ENCODE measurements at regions of chr17 and their contacts with region 1.

Region 1: GRCh38 chr17:80594431-80595269 is 50.0 kb downstream of the RPTOR start:
- DNase-seq: no peak
- H3K4me3 Mint-ChIP-seq: no peak overlapping the region
- H3K27ac Mint-ChIP-seq: no peak overlapping the region
- H3K4me1 Mint-ChIP-seq: peaks cover 73% of the 10 kb centered on the region
- H3K27me3 Mint-ChIP-seq: no peaks in the 10 kb centered on the region

Region 2: DNA sequence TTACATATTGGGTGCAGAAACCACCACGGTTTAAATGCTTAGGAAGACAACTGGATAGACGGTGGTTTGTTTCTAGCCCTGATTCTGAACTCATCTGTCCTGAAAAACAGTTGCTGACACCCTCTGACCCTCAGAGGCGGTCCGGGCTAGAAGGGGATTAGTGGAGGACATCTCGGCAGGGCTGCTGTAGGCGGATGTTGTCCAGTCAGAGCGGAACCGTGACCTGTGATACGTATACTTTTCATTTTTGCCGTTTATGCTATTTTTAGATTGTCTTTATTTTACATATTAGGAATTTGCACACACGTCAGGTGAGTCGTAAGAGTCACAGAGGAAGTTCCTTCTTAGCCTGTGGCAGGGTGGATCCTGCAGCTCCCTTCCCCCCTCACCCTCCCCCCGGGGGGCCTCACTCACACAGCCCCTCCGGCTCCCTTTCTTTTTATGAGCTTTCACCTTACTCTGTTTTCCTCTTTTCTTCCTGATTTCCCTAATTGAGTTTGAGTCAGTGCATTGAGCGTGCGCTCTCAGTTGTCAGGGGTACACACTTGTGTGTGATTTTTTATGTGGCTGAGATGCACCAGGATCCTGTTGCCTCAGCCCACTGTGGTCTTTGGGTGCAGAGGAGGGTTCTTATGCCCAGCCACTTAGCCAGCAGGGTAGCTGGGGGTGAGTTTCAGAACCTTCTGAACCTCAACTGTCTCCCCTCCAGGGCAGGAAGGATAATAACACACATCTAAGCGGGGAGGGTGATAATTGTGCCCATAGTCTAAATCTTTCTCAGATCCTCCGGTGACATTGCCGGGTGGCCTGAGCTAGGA is 185.9 kb after region 1 on chr17:
- CTCF ChIA-PET with region 1: no interaction called
- intact Hi-C with region 1: loop called (anchors 5 kb)
- DNase-seq: peak; percentile 76
- H3K4me3 Mint-ChIP-seq: peak overlapping the region; percentile 76
- H3K27ac Mint-ChIP-seq: peak overlapping the region; percentile 98
- H3K4me1 Mint-ChIP-seq: peaks cover 79% of the 10 kb centered on the region
- H3K27me3 Mint-ChIP-seq: no peaks in the 10 kb centered on the region